Activated T-helper 2 cell treated with anti-CD3 and anti-CD28 coated beads, Interferon-gamma antibody, Interleukin-2, Interleukin-4, amounts not matched to agents 10 μg/mL and 5 μg/mL and 100 μg/mL, durations not matched to agents 14 hours and 24 hours and 36 hours (primary cell): ENCODE measurements at regions of chr6 and their contacts with region 1.

Region 1: GRCh38 chr6:548517-548916 is 108.4 kb downstream of the HUS1B start:
- DNase-seq: no peak
- H3K4me3 Mint-ChIP-seq: peak overlapping the region; percentile 75
- H3K27ac Mint-ChIP-seq: peak overlapping the region; percentile 99
- H3K4me1 Mint-ChIP-seq: peaks cover 75% of the 10 kb centered on the region
- H3K27me3 Mint-ChIP-seq: no peaks in the 10 kb centered on the region

Region 2: GRCh38 chr6:188821-189655 is 359.5 kb before region 1 on chr6:
- intact Hi-C with region 1: loop called (anchors 2 kb)
- DNase-seq: peak; percentile 77
- H3K4me3 Mint-ChIP-seq: peak overlapping the region; percentile 20
- H3K27ac Mint-ChIP-seq: peak overlapping the region; percentile 71
- H3K4me1 Mint-ChIP-seq: peaks cover 46% of the 10 kb centered on the region
- H3K27me3 Mint-ChIP-seq: no peaks in the 10 kb centered on the region

Region 3: GRCh38 chr6:391559-392440 is 156.7 kb before region 1 on chr6 and contains the start of gene IRF4:
- intact Hi-C with region 1: loop called (anchors 1 kb)
- DNase-seq: peak; percentile 70
- H3K4me3 Mint-ChIP-seq: peak within 1 kb of the TSS; percentile 95
- H3K27ac Mint-ChIP-seq: peak within 1 kb of the TSS; percentile 96
- H3K4me1 Mint-ChIP-seq: peaks cover 36% of the 10 kb centered on the region
- H3K27me3 Mint-ChIP-seq: no peaks in the 10 kb centered on the region
- total RNA-seq, gene IRF4: 1,053 and 1,062 TPM in 2 replicates

Region 4: DNA sequence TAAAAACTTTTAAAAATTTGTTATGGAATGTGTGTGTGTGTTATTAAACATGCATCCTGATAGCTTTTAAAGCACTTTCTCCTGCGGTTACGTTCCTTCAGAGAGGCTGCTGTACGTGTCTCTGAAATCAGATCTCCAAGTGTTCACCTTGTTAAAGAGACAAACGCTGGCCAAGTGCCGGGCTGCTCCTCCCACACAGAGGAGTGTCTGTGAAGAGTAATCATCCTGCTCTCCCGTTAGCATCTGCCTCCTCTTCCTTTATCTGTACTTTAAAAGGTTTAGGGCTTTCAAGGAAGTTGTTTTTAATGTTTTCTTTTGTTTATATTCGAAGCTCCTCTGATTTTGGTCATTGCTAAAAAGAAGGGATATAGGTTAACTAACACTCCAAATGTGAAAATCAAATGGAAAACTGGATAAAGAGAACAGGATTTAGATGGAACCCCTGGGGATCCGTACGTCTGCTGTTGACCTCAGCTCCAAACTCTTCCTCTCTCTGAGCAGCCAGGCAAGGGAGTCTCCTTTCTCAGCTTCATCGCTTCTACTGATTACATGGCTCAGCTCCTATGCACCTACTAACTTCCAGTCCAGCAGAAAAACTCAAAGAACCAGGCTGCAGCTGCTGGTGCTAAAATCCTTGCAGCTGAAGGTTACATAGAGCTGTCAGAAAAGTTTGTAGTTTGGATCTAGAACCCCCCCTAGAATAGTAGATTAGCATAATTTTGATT is 136.9 kb before region 1 on chr6:
- intact Hi-C with region 1: no loop called
- DNase-seq: no peak
- H3K4me3 Mint-ChIP-seq: no peak overlapping the region
- H3K27ac Mint-ChIP-seq: peak overlapping the region; percentile 73
- H3K4me1 Mint-ChIP-seq: peaks cover 56% of the 10 kb centered on the region
- H3K27me3 Mint-ChIP-seq: no peaks in the 10 kb centered on the region

Region 5: DNA sequence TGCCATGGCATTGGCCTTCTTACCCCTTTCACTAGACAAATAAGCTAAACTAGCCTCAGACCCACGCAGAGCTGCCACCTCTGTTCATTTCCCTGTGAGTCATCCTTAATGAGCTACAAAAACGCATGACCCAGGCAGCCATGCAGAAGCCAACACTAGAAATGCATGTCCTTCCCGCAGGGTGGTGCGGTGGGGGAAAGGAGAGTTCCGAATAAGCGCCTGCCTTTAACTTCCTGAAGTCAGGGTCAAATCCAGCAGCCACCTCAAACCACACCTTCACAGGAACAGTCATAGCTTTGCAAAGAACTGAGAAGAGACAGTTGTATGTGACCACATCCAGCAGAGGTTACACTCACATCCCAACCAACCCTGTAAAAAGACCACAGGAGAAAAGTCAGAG is 116.5 kb before region 1 on chr6:
- intact Hi-C with region 1: loop called (anchors 1 kb)
- DNase-seq: peak; percentile 69
- H3K4me3 Mint-ChIP-seq: no peak overlapping the region
- H3K27ac Mint-ChIP-seq: peak overlapping the region; percentile 64
- H3K4me1 Mint-ChIP-seq: peaks cover 80% of the 10 kb centered on the region
- H3K27me3 Mint-ChIP-seq: no peaks in the 10 kb centered on the region

Region 6: DNA sequence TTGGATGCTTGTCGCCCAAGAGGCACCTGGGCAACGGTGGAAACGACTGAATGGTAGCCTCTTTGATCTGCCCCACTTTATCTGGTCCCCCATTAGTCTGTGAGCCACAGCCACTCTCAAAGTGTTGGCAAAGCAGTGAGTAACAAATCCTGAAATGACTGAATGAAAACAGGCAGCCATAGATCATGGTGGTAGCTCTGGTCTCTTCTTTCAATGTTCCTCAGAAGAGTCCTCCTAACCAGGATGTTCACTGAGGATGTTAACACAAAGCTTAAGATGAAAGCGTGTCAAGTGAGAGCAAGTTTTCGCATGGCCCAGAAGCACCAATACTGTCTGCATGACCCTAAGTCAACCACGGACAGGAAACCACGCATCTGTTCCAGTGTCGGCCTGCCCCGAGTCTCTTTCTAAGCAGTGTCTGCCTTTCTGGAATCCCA is 49.7 kb before region 1 on chr6:
- intact Hi-C with region 1: loop called (anchors 1 kb)
- DNase-seq: peak; percentile 57
- H3K4me3 Mint-ChIP-seq: peak overlapping the region; percentile 72
- H3K27ac Mint-ChIP-seq: peak overlapping the region; percentile 86
- H3K4me1 Mint-ChIP-seq: peaks cover 81% of the 10 kb centered on the region
- H3K27me3 Mint-ChIP-seq: no peaks in the 10 kb centered on the region

Region 7: DNA sequence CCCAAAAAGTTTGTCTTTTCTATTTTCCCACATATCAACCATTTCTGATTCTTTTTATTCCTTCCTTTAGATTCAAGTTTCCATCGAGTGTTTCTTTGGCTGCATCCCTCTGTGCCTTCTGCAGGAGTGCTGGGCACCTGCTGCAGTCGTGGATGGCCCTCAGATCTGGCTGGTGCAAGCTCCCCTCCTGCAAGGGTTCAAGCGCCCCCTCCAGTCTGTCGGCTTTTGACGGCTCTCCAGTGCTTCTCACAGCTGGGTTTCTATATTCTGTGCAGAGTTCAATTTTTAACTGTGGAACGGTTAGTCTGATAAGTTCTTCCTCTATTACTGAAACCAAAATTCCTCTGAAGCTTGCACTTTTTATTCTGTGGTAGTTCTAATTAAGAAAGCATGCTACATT is 23.7 kb before region 1 on chr6:
- intact Hi-C with region 1: loop called (anchors 1 kb)
- DNase-seq: no peak
- H3K4me3 Mint-ChIP-seq: no peak overlapping the region
- H3K27ac Mint-ChIP-seq: peak overlapping the region; percentile 81
- H3K4me1 Mint-ChIP-seq: peaks cover 28% of the 10 kb centered on the region
- H3K27me3 Mint-ChIP-seq: no peaks in the 10 kb centered on the region

Region 8: GRCh38 chr6:579339-579738 is 30.8 kb after region 1 on chr6:
- intact Hi-C with region 1: no loop called
- DNase-seq: no peak
- H3K4me3 Mint-ChIP-seq: no peak overlapping the region
- H3K27ac Mint-ChIP-seq: no peak overlapping the region
- H3K4me1 Mint-ChIP-seq: peaks cover 40% of the 10 kb centered on the region
- H3K27me3 Mint-ChIP-seq: no peaks in the 10 kb centered on the region